Posterior vena cava (tissue), 2 donors: ENCODE measurements at regions of chr9 and their contacts with region 1.

Region 1: GRCh38 chr9:93453047-93453914 is at the start of gene FAM120AOS:
- DNase-seq: peak; percentile 97
- total RNA-seq, gene FAM120AOS: 31.5 to 44.0 TPM

Region 2: DNA sequence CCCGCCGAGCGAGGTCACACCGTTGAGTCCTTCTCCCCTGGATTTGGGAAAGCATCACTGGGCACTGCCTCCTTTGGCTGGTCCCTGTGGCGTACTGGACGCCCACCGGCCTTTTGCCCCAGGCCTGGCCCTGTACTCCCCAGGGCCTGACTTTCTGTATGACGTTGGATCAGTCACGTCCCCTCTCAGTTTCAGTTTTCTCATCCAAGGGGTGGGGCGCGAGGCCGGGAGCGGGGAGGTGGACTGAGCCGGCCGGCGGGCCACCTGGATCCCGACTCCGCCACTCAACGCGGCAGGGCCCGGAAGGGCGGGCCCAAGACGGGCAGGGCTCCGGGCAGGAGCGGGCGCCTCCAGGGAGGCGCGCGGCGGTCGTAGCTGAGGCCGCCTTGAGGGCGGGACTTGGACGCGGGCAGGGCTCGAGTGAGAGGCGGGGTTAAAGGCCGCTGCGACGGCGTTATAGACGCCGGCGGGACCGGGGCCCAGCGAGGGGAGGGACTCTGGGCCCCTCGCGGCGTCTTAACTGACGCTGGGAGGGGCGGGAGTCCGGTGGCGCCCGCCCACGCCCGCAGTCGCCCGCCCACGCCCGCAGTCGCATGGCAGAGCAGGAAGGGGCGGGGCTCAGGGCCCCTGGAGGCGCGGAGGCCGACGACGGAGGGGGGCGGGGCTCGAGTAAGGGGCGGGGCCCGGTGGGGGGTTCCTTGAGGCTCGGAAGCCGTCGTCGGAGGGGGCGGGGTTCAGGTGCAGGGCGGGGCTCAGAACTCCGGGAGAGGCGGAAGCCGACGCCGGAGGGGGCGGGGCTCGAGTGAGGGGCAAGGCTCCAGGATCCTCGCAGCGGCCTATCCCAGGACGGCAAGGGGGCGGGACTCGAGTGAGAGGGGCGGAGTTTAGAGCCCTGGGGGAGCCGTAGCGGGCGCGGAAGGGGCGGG is 357.8 kb before region 1 on chr9:
- intact Hi-C with region 1: loop called in 1 of 2 experiments (anchors 10 kb)
- DNase-seq: peak; percentile 100

Region 3: GRCh38 chr9:93464395-93464794 is 11.1 kb after region 1 on chr9:
- intact Hi-C with region 1: loop called in 1 of 2 experiments (anchors 1 kb)
- DNase-seq: no peak

Region 4: DNA sequence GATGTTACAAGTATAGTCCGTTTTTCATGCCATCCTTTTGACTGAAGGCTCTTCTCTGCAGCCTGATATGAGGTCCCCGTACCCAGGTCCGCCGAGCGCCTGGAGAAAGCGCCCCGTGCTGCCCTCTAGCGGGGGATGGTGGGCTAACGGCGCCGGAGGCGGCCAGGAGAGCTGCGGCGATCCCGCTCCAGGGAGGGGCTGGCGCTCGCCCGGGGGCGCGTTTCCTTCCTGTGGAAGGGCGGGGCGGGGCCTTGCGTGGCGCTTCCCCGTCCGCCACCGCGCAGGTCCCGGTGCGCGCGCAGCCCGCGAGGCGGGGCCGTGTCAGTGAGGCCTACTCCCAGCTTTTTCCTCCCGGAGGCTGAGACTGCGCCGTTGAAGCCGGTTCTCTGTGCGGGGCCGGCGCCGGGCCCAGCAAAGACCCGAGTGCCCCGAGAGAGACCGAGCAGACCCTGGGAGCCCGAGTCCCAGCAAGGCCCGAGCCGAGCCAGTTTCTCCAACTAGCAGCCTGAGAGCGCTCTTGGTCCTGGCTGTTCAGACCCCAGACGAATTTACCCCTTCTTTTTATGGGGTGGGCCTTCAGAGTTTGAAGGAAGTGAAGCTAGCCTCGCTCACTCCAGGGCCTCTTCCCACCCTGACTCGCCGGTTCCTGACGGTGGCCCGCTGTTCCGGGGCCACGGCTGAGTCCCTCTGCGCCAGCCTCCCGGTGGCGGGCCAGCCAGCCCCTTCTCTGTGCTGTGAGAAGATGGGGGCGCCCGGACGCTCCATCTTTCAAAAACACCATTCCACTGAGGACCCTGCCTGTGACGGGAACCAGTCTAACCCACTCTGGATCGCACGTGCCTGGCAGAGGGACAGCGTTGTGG is 113.4 kb after region 1 on chr9:
- intact Hi-C with region 1: loop called in 1 of 2 experiments (anchors 5 kb)
- DNase-seq: peak; percentile 100

Region 5: DNA sequence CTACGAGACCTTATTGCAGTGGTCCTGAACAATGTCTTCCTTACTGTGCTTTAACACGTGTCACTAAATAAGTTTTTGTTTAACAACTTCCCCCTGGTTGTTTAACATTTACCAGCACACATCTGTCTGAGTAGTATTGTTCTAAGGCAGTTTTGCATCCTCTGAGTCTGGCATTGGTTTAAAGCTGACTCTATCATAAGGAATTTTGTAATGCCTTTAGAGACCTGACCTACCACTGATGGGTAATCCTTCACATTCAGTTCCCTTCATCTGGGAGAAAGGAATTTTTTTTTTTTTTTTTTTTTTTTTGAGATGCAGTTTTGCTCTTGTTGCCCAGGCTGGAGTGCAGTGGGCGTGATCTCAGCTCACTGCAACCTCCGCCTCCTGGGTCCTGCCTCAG is 1081.6 kb after region 1 on chr9:
- intact Hi-C with region 1: no loop called
- DNase-seq: no peak